ENCODE measurements at regions of chr22 and their contacts with region 1.

Region 1: DNA sequence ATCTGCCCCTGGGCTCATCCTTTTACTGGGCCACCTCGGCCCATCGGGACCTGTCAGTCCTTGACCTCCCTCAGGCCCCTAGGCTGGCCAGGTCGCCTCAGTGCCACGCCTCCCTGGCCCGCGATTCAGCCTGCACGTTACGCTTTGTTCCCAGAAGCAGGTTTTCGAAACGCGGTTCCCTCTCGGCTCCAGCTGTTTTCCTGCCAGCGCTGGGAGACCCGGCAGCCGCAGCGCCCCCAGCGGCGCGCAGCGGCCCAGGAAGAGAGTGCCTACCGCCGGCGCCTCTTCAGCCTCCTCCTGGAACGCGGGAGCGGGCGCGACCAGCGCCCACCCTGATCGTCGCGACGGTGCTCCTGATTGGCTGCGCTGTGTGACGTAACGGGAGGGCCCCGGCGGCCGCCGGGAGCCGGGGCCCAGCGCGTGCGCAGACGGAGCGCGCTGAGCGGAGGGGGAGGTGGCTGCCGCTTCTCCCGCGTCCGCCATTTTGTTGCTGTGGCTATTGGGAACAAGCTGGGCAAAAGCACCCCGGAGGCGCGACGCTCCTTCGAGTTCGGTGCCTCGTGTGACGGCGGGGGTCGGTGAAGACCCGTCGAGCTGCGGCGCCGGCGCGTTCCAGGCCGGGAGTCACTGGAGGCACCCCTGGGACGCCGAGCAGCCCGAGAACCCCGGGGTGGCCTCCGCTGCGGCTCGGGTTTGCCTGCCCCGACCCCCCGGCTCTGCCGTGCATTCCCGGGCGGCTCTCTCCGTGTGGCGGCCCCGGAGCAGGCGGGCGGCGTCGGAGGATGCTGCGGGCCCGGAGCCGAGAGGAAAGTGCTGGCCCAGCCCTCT is at the start of gene CRKL:
- DNase-seq: peak; percentile 90 to 99 (median 95)
- ATAC-seq: peak; percentile 96
- H3K4me3 ChIP-seq: peak within 1 kb of the TSS; percentile 99
- H3K4me3 Mint-ChIP-seq: peak within 1 kb of the TSS; percentile 98
- H3K27ac ChIP-seq: peak within 1 kb of the TSS; percentile 71 to 84
- H3K27ac Mint-ChIP-seq: peak within 1 kb of the TSS; percentile 90
- H3K4me1 ChIP-seq: peaks cover 32% of the 10 kb centered on the region
- H3K4me1 Mint-ChIP-seq: peaks cover 49% of the 10 kb centered on the region
- H3K27me3 ChIP-seq: no peaks in the 10 kb centered on the region
- H3K27me3 Mint-ChIP-seq: no peaks in the 10 kb centered on the region
- CTCF ChIP-seq: peak; percentile 97
- total RNA-seq, gene CRKL: 41.9 to 43.5 TPM

Region 2: GRCh38 chr22:20507253-20508066 is 409.7 kb before region 1 on chr22 and contains the start of gene MED15:
- CTCF ChIA-PET with region 1: no interaction called
- POLR2A ChIA-PET with region 1: no interaction called
- intact Hi-C with region 1: loop called in 1 of 2 experiments (anchors 5 kb)
- DNase-seq: peak; percentile 77 to 93 (median 84)
- ATAC-seq: peak; percentile 83
- H3K4me3 ChIP-seq: peak within 1 kb of the TSS; percentile 100
- H3K4me3 Mint-ChIP-seq: peak within 1 kb of the TSS; percentile 98
- H3K27ac ChIP-seq: peak within 1 kb of the TSS; percentile 88 to 90
- H3K27ac Mint-ChIP-seq: peak within 1 kb of the TSS; percentile 94
- H3K4me1 ChIP-seq: peaks cover 42% of the 10 kb centered on the region
- H3K4me1 Mint-ChIP-seq: peaks cover 51% of the 10 kb centered on the region
- H3K27me3 ChIP-seq: no peaks in the 10 kb centered on the region
- H3K27me3 Mint-ChIP-seq: no peaks in the 10 kb centered on the region
- CTCF ChIP-seq: no peak
- total RNA-seq, gene MED15: 181 to 191 TPM

Region 3: DNA sequence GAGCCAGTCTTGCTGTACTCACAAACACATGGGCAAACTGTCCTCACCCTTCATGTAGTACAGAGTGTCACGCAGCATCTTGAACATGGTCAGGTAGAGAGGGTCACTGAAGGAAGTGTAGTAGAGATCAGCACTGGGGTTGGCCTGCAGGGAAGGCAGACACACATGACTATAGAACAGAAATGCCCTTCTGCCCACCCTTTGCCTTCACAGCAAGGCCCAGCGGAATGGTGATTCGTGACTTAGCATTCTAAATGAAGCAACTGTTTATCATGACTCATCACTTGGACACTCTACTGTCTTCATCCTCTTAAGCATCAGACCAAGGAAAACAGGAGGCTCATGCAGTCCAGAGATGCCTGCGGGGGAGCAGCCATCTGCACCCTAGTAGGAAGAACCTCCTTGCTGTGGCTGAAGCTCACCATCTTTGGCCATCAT is 109.9 kb before region 1 on chr22:
- CTCF ChIA-PET with region 1: interaction called, 3 read pairs
- POLR2A ChIA-PET with region 1: no interaction called
- intact Hi-C with region 1: loop called in 1 of 2 experiments (anchors 5 kb)
- DNase-seq: no peak
- ATAC-seq: no peak
- H3K4me3 ChIP-seq: no peak overlapping the region
- H3K4me3 Mint-ChIP-seq: no peak overlapping the region
- H3K27ac ChIP-seq: no peak overlapping the region
- H3K27ac Mint-ChIP-seq: no peak overlapping the region
- H3K4me1 ChIP-seq: no peaks in the 10 kb centered on the region
- H3K4me1 Mint-ChIP-seq: peaks cover 13% of the 10 kb centered on the region
- H3K27me3 ChIP-seq: no peaks in the 10 kb centered on the region
- H3K27me3 Mint-ChIP-seq: no peaks in the 10 kb centered on the region
- CTCF ChIP-seq: no peak

Region 4: GRCh38 chr22:20981787-20982562 is 64.8 kb after region 1 on chr22 and contains the start of gene LZTR1:
- CTCF ChIA-PET with region 1: interaction called, 3 read pairs
- POLR2A ChIA-PET with region 1: interaction called, 4 read pairs
- intact Hi-C with region 1: loop called in 1 of 2 experiments (anchors 5 kb)
- DNase-seq: peak; percentile 40 to 85 (median 66)
- ATAC-seq: peak; percentile 58
- H3K4me3 ChIP-seq: peak within 1 kb of the TSS; percentile 76
- H3K4me3 Mint-ChIP-seq: peak within 1 kb of the TSS; percentile 97
- H3K27ac ChIP-seq: peak within 1 kb of the TSS; percentile 69 to 80
- H3K27ac Mint-ChIP-seq: peak within 1 kb of the TSS; percentile 87
- H3K4me1 ChIP-seq: peaks cover 49% of the 10 kb centered on the region
- H3K4me1 Mint-ChIP-seq: peaks cover 48% of the 10 kb centered on the region
- H3K27me3 ChIP-seq: no peaks in the 10 kb centered on the region
- H3K27me3 Mint-ChIP-seq: no peaks in the 10 kb centered on the region
- CTCF ChIP-seq: peak; percentile 52
- total RNA-seq, gene LZTR1: 48.4 to 51.3 TPM

Region 5: DNA sequence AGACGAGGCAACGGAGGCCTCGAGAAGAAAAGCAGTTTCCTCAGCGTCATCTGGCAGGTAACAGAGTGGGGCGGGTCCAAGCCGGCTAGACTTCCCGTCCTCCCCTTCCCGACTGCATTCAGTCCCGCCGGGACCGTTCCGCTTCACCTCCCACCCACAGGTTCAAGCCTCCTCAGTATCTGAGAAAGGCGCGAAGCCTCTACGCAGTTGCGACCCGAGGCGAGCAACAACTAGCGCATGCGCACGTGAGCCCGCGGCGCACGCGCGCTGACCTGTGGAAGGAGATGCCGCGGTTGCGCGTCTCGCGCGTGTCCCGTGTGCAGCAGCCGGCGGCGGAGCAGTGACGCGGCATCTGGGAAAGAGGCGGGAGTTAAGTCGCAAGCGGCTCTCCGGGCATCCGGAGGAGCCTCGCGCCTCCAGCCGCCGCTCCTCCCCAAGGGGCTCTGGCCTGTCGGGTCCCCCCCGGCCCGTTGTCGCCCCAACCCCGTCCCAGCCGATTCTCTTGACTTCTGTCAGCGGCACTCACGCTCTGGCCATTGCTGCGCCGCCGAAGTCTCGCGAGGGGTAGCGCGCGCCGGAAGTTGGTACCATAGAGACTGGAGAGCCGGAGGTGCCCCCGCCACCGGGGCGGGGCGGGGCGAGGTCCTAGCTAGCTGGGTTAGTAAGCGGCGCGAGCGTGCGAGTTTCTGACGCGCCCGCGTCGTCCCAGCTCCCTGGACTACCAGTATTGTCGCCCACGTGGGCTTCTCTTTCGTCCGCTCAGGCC is 84.5 kb after region 1 on chr22 and contains the start of gene THAP7:
- CTCF ChIA-PET with region 1: no interaction called
- POLR2A ChIA-PET with region 1: interaction called, 11 read pairs
- intact Hi-C with region 1: loop called (anchors 1 kb)
- DNase-seq: peak; percentile 94 to 99 (median 96)
- ATAC-seq: peak; percentile 87
- H3K4me3 ChIP-seq: peak within 1 kb of the TSS; percentile 82
- H3K4me3 Mint-ChIP-seq: peak within 1 kb of the TSS; percentile 93
- H3K27ac ChIP-seq: peak within 1 kb of the TSS; percentile 96 to 100
- H3K27ac Mint-ChIP-seq: peak within 1 kb of the TSS; percentile 97
- H3K4me1 ChIP-seq: peaks cover 54% of the 10 kb centered on the region
- H3K4me1 Mint-ChIP-seq: peaks cover 46% of the 10 kb centered on the region
- H3K27me3 ChIP-seq: no peaks in the 10 kb centered on the region
- H3K27me3 Mint-ChIP-seq: no peaks in the 10 kb centered on the region
- CTCF ChIP-seq: no peak
- total RNA-seq, gene THAP7: 82.7 to 84.0 TPM

Region 6: GRCh38 chr22:21041937-21042580 is 124.9 kb after region 1 on chr22:
- CTCF ChIA-PET with region 1: no interaction called
- POLR2A ChIA-PET with region 1: no interaction called
- intact Hi-C with region 1: no loop called
- DNase-seq: no peak
- ATAC-seq: no peak
- H3K4me3 ChIP-seq: no peak overlapping the region
- H3K4me3 Mint-ChIP-seq: no peak overlapping the region
- H3K27ac ChIP-seq: no peak overlapping the region
- H3K27ac Mint-ChIP-seq: no peak overlapping the region
- H3K4me1 ChIP-seq: peaks cover 30% of the 10 kb centered on the region
- H3K4me1 Mint-ChIP-seq: peaks cover 21% of the 10 kb centered on the region
- H3K27me3 ChIP-seq: peaks cover 6 to 12% of the 10 kb centered on the region in 2 experiments
- H3K27me3 Mint-ChIP-seq: peaks cover 40% of the 10 kb centered on the region
- CTCF ChIP-seq: no peak